Activated CD8-positive, alpha-beta T cell treated with anti-CD3 and anti-CD28 coated beads for 36 hours (primary cell): ENCODE measurements at regions of chr18 and their contacts with region 1.

Region 1: DNA sequence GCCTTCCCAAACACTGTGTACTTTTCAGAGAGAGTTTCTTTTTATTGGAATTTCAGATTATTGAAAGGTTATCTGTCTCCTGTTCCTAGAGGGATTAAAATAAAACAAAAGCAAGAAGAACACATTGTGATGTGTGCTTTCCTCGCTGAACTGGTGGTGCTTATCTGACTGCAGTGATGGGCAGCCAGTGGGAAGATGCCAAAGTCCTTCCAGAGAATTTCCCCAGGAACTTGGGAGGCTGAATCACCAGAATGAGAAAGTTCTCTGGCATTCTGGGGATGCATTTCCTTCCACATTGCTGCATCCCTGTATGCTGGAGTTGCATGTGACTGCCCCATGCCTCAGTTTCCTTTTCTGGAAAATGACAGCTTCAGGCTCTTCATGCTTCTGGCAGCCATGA is 53.9 kb upstream of the SEC11C start:
- DNase-seq: no peak
- ATAC-seq: no peak
- H3K4me3 Mint-ChIP-seq: no peak overlapping the region
- H3K27ac Mint-ChIP-seq: no peak overlapping the region
- H3K4me1 Mint-ChIP-seq: peaks cover 7% of the 10 kb centered on the region
- H3K27me3 Mint-ChIP-seq: peaks cover 16% of the 10 kb centered on the region
- CTCF ChIP-seq: no peak

Region 2: GRCh38 chr18:58911766-58912165 is 174.0 kb before region 1 on chr18:
- CTCF ChIA-PET with region 1: no interaction called
- POLR2A ChIA-PET with region 1: no interaction called
- intact Hi-C with region 1: no loop called
- DNase-seq: no peak
- ATAC-seq: no peak
- H3K4me3 Mint-ChIP-seq: no peak overlapping the region
- H3K27ac Mint-ChIP-seq: no peak overlapping the region
- H3K4me1 Mint-ChIP-seq: no peaks in the 10 kb centered on the region
- H3K27me3 Mint-ChIP-seq: peaks cover 20% of the 10 kb centered on the region
- CTCF ChIP-seq: no peak

Region 3: DNA sequence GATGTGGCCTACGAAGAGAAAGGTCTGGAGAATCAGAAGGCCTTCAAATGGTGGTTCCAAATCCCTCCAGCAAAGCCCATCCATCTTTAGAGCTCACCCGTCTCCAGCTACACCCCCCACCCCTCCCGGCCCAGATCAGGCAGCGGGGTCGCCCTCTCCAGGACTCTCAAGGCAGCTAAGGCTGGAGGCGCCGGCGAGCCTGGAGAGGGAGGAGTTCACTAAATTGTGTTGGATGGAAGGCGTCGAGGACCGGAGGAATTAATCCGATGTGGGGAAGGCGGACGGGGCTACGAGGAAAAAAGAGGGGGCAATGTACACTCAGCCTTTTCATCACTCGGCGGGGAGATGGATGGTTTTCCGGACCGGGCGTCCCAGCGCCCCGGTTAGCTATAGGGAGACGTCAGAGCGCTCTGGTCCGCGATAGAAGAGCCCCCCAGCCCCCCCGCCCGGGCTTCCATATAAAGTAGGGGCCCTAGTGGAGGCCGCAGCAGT is 133.9 kb after region 1 on chr18 and contains the start of gene GRP:
- CTCF ChIA-PET with region 1: no interaction called
- POLR2A ChIA-PET with region 1: no interaction called
- intact Hi-C with region 1: loop called (anchors 10 kb)
- DNase-seq: no peak
- ATAC-seq: no peak
- H3K4me3 Mint-ChIP-seq: no peak within 1 kb of the TSS
- H3K27ac Mint-ChIP-seq: no peak within 1 kb of the TSS
- H3K4me1 Mint-ChIP-seq: peaks cover 9% of the 10 kb centered on the region
- H3K27me3 Mint-ChIP-seq: peaks cover 63% of the 10 kb centered on the region
- CTCF ChIP-seq: no peak
- total RNA-seq, gene GRP: not detected

Region 4: DNA sequence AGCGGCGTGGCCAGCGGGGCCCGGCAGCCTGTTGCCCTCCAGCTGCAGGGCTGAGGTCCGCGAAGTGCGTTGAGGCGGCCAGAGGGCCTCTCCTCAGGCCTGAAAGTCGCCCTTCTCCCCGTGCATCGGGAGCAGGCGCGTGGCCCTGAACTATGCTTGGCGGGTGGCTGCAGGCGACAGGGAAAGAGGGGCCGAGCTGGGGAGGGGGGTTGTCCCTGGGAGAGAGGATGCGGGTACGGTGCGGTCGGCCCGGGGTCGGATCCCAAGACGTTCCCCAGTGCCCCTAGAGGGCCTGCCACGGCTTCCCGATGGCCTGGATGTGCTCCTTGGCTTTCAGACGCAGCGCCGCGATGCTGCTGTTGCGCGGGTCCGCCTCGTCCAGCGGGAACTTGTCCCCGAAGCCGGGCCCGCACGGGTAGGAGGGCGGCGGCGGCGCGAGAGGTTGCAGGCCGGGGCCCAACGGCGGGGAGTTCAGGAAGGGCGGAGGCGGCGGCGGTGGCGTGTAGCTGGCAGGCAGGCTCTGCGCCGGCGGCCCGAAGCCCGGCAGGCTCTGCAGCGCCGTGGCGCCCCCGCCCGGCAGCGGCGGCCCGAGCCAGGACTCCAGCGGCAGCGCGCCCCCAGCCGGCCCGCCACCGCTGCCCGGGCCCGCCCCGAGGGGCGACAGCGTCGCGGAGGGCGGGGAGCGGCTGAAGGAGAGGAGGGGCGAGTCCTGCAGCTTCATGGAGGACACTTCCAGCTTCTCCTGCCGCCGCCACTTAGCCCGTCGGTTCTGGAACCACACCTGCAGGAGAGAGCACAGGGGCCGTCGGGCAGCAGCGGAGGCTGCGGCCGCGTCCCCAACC is 183.1 kb after region 1 on chr18:
- CTCF ChIA-PET with region 1: interaction called, 28 read pairs
- POLR2A ChIA-PET with region 1: no interaction called
- intact Hi-C with region 1: loop called (anchors 10 kb)
- DNase-seq: peak; percentile 74
- ATAC-seq: peak; percentile 83
- H3K4me3 Mint-ChIP-seq: no peak overlapping the region
- H3K27ac Mint-ChIP-seq: no peak overlapping the region
- H3K4me1 Mint-ChIP-seq: peaks cover 23% of the 10 kb centered on the region
- H3K27me3 Mint-ChIP-seq: peaks cover 81% of the 10 kb centered on the region
- CTCF ChIP-seq: no peak